Heart right ventricle (tissue), 16 donors: ENCODE measurements at regions of chr6 and their contacts with region 1.

Region 1: GRCh38 chr6:92777146-92777740 is 642.1 kb downstream of the EPHA7 start:
- DNase-seq: no peak
- ATAC-seq: no peak
- H3K4me3 ChIP-seq: no peak overlapping the region
- H3K27ac ChIP-seq: no peak overlapping the region
- H3K4me1 ChIP-seq: peaks cover 0 to 5% (median 0%) of the 10 kb centered on the region in 9 donors
- H3K27me3 ChIP-seq: no peaks in the 10 kb centered on the region
- CTCF ChIP-seq: peak in 8 of 9 donors; percentile 10 to 64 (median 51)

Region 2: DNA sequence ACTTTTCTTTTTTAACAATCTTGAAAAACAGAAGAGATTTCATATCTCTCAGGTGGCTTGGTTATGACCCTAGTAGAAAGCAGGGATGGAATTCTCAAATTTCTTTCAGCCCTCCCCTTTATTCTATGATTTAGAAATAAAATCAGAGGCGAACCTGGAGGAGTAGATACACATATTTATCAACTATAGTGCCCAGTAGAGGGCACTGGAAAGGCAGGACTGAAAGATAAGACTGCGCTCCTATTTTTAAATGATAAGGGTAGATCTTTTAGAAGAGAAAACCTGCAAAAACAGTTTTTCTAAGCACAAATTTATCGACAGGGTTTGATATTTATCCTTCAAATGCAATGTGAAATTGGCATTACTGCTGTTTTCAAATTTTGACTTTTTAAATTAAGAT is 654.5 kb before region 1 on chr6:
- intact Hi-C with region 1: loop called in 3 of 10 experiments (anchors 5 to 10 kb)
- DNase-seq: no peak
- ATAC-seq: no peak
- H3K4me3 ChIP-seq: no peak overlapping the region
- H3K27ac ChIP-seq: no peak overlapping the region
- H3K4me1 ChIP-seq: peaks cover 0 to 5% (median 0%) of the 10 kb centered on the region in 9 donors
- H3K27me3 ChIP-seq: no peaks in the 10 kb centered on the region
- CTCF ChIP-seq: peak in 6 of 9 donors; percentile 21 to 54 (median 29)

Region 3: DNA sequence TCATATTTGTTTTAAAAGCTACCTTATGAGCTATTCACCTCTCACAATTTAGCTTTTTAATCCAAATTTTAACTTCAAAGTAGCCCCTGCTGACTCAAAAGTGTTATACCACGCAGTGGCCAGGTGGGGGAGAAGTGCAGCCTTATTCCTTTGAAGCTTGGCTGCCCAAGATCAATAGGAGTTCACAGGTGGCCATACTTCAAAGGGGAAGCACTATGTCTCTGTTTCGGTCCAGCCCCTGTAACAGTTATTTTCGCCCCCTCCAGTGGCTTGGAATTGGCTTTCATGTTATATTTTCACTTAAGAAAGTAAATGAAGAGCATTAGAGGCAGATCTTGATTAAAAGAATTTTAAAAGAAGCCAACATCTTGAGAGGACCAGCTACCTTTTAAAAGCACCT is 33.7 kb after region 1 on chr6:
- intact Hi-C with region 1: no loop called
- DNase-seq: no peak
- ATAC-seq: no peak
- H3K4me3 ChIP-seq: no peak overlapping the region
- H3K27ac ChIP-seq: no peak overlapping the region
- H3K4me1 ChIP-seq: no peaks in the 10 kb centered on the region
- H3K27me3 ChIP-seq: no peaks in the 10 kb centered on the region
- CTCF ChIP-seq: peak in 7 of 9 donors; percentile 31 to 53 (median 44)